ENCODE measurements at regions of chr1 and their contacts with region 1.

Region 1: GRCh38 chr1:7207875-7208646 is 422.8 kb downstream of the CAMTA1 start:
- DNase-seq: peak; percentile 84
- H3K4me3 ChIP-seq: no peak overlapping the region
- H3K27ac ChIP-seq: no peak overlapping the region
- H3K4me1 ChIP-seq: no peaks in the 10 kb centered on the region
- H3K27me3 ChIP-seq: peaks cover 30% of the 10 kb centered on the region
- CTCF ChIP-seq: peak; percentile 91

Region 2: DNA sequence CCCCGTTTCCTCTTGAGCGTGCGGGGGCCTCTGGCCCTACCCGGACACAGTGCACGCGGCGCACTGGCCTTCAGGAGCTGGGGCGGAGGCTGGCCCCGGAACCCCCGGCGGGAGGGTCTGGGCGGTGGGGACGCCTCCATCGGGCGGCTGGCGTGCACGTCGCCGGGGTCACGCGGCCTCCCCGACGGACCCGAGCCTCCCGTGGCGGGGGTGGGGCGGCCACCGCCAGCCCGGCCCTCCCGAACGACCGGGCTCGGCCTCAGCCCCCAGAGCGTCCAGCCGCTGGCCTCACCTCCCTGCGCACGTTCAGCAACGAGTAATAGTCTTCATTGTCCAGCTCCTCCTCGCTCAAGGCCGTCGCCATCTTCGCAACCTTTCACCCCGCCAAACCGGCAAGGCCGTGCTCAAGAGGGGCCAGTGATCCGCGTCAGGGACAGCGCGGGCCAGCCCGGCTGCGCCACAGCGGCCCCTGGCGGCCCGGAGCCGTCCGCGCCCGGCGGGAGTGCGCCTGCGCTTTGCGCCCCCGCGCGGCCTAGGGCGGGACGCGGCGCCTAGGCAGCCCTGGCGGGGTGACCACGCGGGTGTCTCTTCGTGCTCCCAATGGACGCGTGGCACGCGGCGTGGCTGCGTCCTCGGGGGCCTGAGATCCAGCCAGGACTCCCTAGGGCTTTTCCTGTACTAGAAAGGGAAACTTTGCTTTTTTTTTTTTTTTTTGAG is 506.5 kb before region 1 on chr1 and contains the start of gene DNAJC11:
- CTCF ChIA-PET with region 1: no interaction called
- POLR2A ChIA-PET with region 1: no interaction called
- intact Hi-C with region 1: loop called (anchors 10 kb)
- DNase-seq: peak; percentile 92
- H3K4me3 ChIP-seq: peak within 1 kb of the TSS; percentile 90
- H3K27ac ChIP-seq: peak within 1 kb of the TSS; percentile 90
- H3K4me1 ChIP-seq: peaks cover 9% of the 10 kb centered on the region
- H3K27me3 ChIP-seq: no peaks in the 10 kb centered on the region
- CTCF ChIP-seq: peak; percentile 63
- total RNA-seq, gene DNAJC11: 94.2 and 106 TPM in 2 replicates

Region 3: DNA sequence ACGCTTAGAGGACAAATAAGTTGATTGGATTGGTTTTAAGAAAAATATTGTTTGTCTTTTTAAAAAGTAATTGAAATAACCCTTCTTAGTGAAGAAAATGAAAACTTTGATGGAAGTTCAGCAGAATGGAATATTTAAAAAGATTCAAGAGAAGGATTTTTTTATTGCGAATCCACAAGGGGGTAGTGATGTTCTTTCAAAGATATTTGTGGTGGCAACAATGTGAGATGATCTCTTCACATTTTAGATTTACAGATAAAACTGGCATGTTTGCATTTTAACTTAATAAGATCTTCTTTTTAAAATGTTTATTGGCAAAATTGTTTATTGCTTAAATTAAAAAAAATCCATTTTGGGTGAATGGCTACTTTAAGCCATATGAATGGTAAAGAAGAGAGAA is 413.9 kb before region 1 on chr1:
- CTCF ChIA-PET with region 1: no interaction called
- POLR2A ChIA-PET with region 1: no interaction called
- intact Hi-C with region 1: loop called (anchors 5 kb)
- DNase-seq: peak; percentile 55
- H3K4me3 ChIP-seq: no peak overlapping the region
- H3K27ac ChIP-seq: no peak overlapping the region
- H3K4me1 ChIP-seq: peaks cover 6% of the 10 kb centered on the region
- H3K27me3 ChIP-seq: no peaks in the 10 kb centered on the region
- CTCF ChIP-seq: peak; percentile 55; the same call in 1 of the 2 replicates

Region 4: DNA sequence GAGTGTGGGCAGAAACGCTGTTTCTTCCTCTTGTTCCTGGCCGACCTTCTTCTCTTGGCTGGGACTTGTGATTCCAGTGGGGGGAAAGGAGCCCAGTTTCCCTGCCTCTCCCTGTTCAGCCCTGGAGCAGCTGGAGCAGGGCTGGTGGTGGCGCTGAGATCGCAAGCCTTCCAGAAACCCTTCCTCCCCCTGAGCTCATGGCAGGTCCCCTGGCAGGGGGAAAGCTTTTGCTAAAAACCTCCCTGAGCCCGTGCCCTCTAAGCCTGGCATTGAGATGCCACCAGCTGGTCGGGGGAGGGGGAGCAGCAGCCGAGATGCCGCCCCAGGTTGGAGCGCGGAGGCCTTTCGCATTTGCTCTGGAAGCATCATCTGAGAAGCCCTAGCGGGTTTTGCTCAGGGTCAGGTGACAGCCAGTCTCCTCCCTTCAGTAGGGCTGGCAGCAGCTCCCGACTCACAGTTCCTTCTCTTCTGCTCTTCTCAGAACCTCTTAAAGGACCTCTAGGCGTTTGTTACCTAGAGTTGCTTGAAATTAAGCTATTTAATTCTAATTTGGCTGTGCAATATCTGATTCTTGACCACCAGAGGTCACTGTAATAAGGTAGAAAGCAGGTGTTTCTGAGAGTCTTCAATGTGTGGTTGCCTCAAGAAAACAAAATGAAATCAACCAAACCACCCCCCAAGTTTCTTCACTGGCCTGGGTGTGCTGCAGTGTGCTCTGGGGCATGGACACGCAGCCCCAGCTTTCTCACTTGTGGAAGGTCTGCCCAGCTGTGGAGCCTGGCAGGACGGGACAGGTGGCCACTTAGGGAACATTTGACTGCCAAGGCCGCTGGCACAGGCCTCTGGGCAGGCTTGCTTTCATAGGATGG is 165.5 kb before region 1 on chr1:
- CTCF ChIA-PET with region 1: interaction called, 22 read pairs
- POLR2A ChIA-PET with region 1: no interaction called
- intact Hi-C with region 1: loop called (anchors 5 kb)
- DNase-seq: peak; percentile 41
- H3K4me3 ChIP-seq: no peak overlapping the region
- H3K27ac ChIP-seq: no peak overlapping the region
- H3K4me1 ChIP-seq: peaks cover 4% of the 10 kb centered on the region
- H3K27me3 ChIP-seq: peaks cover 26% of the 10 kb centered on the region
- CTCF ChIP-seq: peak; percentile 67

Region 5: DNA sequence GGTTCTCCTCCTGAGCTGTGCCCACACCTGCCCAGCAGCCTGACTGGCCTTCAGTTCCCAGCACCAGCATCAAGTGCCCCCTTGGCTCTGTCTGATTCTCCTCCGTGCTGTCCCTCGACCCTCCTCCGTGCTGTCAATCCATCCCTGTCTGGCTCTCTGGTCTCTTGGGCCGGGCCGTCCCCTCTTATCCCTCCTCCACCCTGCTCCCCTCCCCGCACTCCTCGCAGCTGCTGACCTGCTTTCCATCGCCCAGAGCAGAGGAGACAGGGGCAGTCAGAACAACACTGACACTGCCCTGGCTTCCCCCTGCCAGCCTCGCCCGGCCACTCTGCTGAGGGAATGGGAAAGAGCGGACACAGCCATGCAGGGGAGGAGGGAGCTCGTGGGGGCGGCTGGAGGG is 155.4 kb before region 1 on chr1:
- CTCF ChIA-PET with region 1: no interaction called
- POLR2A ChIA-PET with region 1: no interaction called
- intact Hi-C with region 1: no loop called
- DNase-seq: no peak
- H3K4me3 ChIP-seq: no peak overlapping the region
- H3K27ac ChIP-seq: no peak overlapping the region
- H3K4me1 ChIP-seq: no peaks in the 10 kb centered on the region
- H3K27me3 ChIP-seq: peaks cover 21% of the 10 kb centered on the region
- CTCF ChIP-seq: no peak